Endothelial cell of umbilical vein (primary cell): ENCODE measurements at regions of chr3 and their contacts with region 1.

Region 1: DNA sequence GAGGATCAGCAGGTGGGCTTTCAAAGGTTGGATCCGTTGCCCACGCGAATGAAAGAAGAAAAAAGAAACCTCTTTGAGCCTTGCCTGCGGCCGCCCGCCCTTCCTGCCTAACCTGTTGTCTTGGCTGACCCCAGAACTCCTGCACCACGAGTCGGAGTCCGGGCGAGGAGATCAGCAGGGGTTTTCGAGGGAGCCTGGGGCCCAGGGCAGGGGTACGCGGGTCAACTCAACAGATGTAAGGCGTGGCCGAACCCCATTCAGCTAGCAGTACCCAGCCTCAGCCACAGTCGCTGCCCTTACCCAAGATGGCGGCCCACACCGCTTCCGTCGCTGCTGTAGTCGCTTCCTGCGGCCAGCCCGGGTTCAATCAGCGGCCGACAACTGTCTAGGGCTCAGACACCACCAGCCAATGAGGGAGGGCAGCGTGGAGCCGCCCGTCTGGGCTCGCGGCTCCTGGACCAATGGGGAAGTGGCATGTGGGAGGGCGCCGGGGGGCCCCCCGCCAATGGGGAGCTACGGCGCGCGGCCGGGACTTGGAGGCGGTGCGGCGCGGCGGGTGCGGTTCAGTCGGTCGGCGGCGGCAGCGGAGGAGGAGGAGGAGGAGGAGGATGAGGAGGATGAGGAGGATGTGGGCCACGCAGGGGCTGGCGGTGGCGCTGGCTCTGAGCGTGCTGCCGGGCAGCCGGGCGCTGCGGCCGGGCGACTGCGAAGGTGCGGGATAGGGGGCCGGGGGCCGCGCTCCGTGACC is at the start of gene MANF:
- DNase-seq: peak; percentile 99
- H3K4me3 ChIP-seq: peak within 1 kb of the TSS; percentile 64 to 97 (median 93)
- H3K27ac ChIP-seq: peak within 1 kb of the TSS; percentile 95
- H3K4me1 ChIP-seq: peaks cover 29% of the 10 kb centered on the region
- H3K27me3 ChIP-seq: no peaks in the 10 kb centered on the region
- CTCF ChIP-seq: no peak
- POLR2A ChIP-seq: peak; percentile 89
- total RNA-seq, gene MANF: 248 and 254 TPM in 2 replicates

Region 2: GRCh38 chr3:50674349-50675178 is 710.3 kb before region 1 on chr3 and contains the start of gene DOCK3:
- CTCF ChIA-PET with region 1: no interaction called
- POLR2A ChIA-PET with region 1: no interaction called
- dilution Hi-C with region 1: no loop called
- intact Hi-C with region 1: loop called (anchors 1 kb)
- DNase-seq: peak; percentile 59
- H3K4me3 ChIP-seq: peak within 1 kb of the TSS in 1 of 3 experiments; percentile 29
- H3K27ac ChIP-seq: no peak within 1 kb of the TSS
- H3K4me1 ChIP-seq: peaks cover 5% of the 10 kb centered on the region
- H3K27me3 ChIP-seq: peaks cover 52 to 71% of the 10 kb centered on the region in 2 experiments
- CTCF ChIP-seq: no peak
- POLR2A ChIP-seq: no peak
- total RNA-seq, gene DOCK3: 0.13 and 0.16 TPM in 2 replicates

Region 3: GRCh38 chr3:51295625-51296024 is 89.3 kb before region 1 on chr3:
- CTCF ChIA-PET with region 1: no interaction called
- POLR2A ChIA-PET with region 1: no interaction called
- dilution Hi-C with region 1: no loop called
- intact Hi-C with region 1: no loop called
- DNase-seq: no peak
- H3K4me3 ChIP-seq: no peak overlapping the region
- H3K27ac ChIP-seq: no peak overlapping the region
- H3K4me1 ChIP-seq: no peaks in the 10 kb centered on the region
- H3K27me3 ChIP-seq: no peaks in the 10 kb centered on the region
- CTCF ChIP-seq: no peak
- POLR2A ChIP-seq: no peak

Region 4: DNA sequence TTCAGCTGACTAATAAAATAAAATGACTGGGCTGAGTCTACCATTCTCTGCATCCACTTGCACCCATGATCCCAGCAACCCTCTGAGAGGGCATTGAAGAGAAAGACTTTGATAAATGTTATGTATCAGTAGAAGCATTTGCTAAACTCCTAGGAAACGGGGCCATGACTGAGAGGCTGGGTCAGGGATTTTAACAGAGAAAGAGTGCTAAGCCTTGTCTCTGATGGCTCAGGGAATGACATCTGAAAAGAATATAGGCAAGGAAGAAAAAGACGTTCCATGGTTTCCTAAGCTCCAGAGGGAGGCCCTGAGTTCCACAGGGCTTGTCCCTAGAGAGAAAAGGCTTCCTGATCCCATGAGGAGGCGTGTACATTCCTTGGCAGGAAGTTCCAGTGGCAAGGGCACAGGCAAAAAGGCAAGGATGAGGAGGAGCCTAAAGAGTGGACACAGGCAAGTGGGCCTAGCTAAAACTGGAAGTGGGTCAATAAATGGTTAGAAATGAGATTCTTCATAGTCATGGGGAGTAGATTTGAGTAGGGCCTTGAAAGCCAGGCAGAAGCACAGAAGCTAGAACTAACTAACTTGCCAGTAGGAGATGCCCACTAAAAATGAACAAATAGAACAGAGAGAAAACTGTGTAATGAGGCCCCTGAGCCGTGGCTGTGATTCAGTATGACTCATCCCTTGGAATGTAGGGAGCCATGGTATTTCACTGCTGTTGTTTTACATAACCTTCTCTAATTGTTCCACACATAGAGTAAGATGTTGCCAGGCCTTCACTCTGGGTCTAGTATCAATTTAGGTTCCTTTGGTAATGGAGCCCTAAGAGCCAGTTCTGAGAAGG is 44.7 kb before region 1 on chr3:
- CTCF ChIA-PET with region 1: no interaction called
- POLR2A ChIA-PET with region 1: interaction called, 7 read pairs
- dilution Hi-C with region 1: no loop called
- intact Hi-C with region 1: loop called (anchors 1 kb)
- DNase-seq: peak; percentile 89
- H3K4me3 ChIP-seq: no peak overlapping the region
- H3K27ac ChIP-seq: peak overlapping the region; percentile 84
- H3K4me1 ChIP-seq: peaks cover 15% of the 10 kb centered on the region
- H3K27me3 ChIP-seq: peaks cover under 1 to 3% of the 10 kb centered on the region in 2 experiments
- CTCF ChIP-seq: no peak
- POLR2A ChIP-seq: no peak